HCT116 (cell line): ENCODE measurements at regions of chr1 and their contacts with region 1.

Region 1: DNA sequence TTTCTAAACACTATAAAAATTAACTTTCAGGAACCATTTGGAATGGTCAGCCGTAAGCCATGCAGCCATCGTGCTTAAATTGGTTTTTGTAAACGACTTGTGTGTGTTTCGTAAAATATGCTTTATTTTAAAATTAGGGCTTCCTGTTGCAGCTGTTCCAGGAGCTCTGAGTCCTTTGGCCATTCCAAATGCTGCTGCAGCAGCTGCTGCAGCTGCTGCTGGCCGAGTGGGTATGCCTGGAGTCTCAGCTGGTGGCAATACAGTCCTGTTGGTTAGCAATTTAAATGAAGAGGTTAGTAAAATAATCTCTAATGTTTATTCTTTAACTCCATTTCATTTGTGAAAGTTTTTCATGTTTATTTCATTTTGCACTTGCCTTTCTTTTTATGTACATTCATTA is 83.1 kb downstream of the PTBP2 start:
- DNase-seq: no peak
- ATAC-seq: no peak
- H3K4me3 ChIP-seq: no peak overlapping the region
- H3K27ac ChIP-seq: no peak overlapping the region
- H3K4me1 ChIP-seq: no peaks in the 10 kb centered on the region
- H3K27me3 ChIP-seq: no peaks in the 10 kb centered on the region
- CTCF ChIP-seq: no peak
- POLR2A ChIP-seq: no peak
- RAD21 ChIP-seq: no peak

Region 2: GRCh38 chr1:97297611-97298010 is 493.0 kb after region 1 on chr1:
- CTCF ChIA-PET with region 1: no interaction called
- POLR2A ChIA-PET with region 1: no interaction called
- RAD21 ChIA-PET with region 1: no interaction called
- intact Hi-C with region 1: no loop called
- DNase-seq: no peak
- ATAC-seq: no peak
- H3K4me3 ChIP-seq: no peak overlapping the region
- H3K27ac ChIP-seq: no peak overlapping the region
- H3K4me1 ChIP-seq: no peaks in the 10 kb centered on the region
- H3K27me3 ChIP-seq: no peaks in the 10 kb centered on the region
- CTCF ChIP-seq: no peak
- POLR2A ChIP-seq: no peak
- RAD21 ChIP-seq: no peak

Region 3: DNA sequence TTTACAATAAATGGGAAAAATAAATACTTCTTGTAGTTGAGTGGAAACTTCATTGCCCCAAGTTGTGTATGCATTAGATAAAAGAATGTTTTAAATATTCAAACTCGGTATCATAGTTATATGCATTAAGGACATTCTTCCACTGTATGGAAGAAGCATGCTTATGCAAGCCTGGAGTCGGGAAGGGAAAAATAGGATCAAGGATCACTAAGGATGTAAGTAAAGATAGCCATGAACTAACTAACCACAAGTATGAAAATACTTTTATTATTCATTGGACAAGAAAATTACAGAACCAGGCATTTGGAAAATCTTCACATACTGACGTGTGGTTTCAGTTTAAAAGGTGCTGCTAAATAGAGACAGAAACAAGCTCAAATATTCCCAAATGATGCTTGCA is 1143.0 kb after region 1 on chr1:
- CTCF ChIA-PET with region 1: no interaction called
- POLR2A ChIA-PET with region 1: no interaction called
- RAD21 ChIA-PET with region 1: no interaction called
- intact Hi-C with region 1: loop called (anchors 5 kb)
- DNase-seq: no peak
- ATAC-seq: no peak
- H3K4me3 ChIP-seq: no peak overlapping the region
- H3K27ac ChIP-seq: no peak overlapping the region
- H3K4me1 ChIP-seq: no peaks in the 10 kb centered on the region
- H3K27me3 ChIP-seq: no peaks in the 10 kb centered on the region
- CTCF ChIP-seq: no peak
- POLR2A ChIP-seq: no peak
- RAD21 ChIP-seq: no peak